Panc1 (cell line): ENCODE measurements at regions of chr16 and their contacts with region 1.

Region 1: GRCh38 chr16:84952335-84953189 is 58.8 kb downstream of the ZDHHC7 start:
- DNase-seq: peak; percentile 61
- ATAC-seq: peak; percentile 97
- H3K4me3 ChIP-seq: no peak overlapping the region
- H3K27ac ChIP-seq: no peak overlapping the region
- H3K4me1 ChIP-seq: no peaks in the 10 kb centered on the region
- H3K27me3 ChIP-seq: no peaks in the 10 kb centered on the region
- CTCF ChIP-seq: peak; percentile 86

Region 2: GRCh38 chr16:84925092-84925772 is 27.3 kb before region 1 on chr16:
- CTCF ChIA-PET with region 1: interaction called, 10 read pairs
- POLR2A ChIA-PET with region 1: no interaction called
- in situ Hi-C with region 1: no loop called
- intact Hi-C with region 1: no loop called
- DNase-seq: peak; percentile 39
- ATAC-seq: peak; percentile 78
- H3K4me3 ChIP-seq: no peak overlapping the region
- H3K27ac ChIP-seq: no peak overlapping the region
- H3K4me1 ChIP-seq: no peaks in the 10 kb centered on the region
- H3K27me3 ChIP-seq: no peaks in the 10 kb centered on the region
- CTCF ChIP-seq: peak; percentile 90

Region 3: DNA sequence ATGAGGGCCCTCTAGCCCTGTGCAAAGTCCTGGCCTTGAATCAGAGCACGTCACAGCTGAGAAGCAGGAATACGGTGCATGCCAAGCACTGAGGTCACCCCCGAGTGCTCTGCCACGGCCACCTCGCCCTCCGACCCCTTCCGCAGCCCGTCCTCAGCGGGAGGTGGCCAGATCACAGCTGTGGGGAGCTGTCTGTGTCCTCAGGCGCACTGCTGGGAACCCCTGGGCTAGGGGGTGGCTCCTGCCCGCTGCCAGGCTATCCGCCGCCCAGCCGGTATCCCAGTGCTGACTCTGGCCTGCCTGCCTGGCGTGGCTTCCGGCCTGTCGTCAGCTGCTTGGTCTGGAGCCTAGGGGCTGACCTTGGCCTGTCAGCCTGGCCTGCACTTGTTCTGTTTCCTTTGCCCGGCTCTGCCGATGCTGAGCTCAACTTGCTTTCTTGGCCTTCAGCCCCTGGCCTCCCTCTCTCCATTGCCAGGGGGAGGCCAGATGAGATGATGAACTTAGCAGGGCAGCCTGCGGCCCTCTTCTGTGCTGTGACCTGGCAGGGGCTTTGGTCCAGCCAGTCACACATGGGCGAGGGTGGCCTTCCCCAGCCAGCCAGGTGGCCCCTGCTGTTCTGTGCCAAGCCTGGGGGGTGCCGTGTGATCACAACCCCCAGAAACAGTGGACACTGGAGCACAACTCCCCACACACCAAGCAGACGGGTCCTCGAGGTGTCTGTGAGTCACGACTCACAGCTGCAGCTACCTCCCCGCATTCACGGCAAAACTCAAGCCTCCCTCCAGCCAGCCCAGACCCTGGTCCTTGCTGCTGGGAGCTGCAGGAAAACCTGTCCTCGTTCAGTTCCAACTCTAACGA is 18.6 kb before region 1 on chr16:
- CTCF ChIA-PET with region 1: interaction called, 3 read pairs
- POLR2A ChIA-PET with region 1: interaction called, 12 read pairs
- in situ Hi-C with region 1: no loop called
- intact Hi-C with region 1: no loop called
- DNase-seq: no peak
- ATAC-seq: no peak
- H3K4me3 ChIP-seq: no peak overlapping the region
- H3K27ac ChIP-seq: no peak overlapping the region
- H3K4me1 ChIP-seq: no peaks in the 10 kb centered on the region
- H3K27me3 ChIP-seq: no peaks in the 10 kb centered on the region
- CTCF ChIP-seq: no peak

Region 4: GRCh38 chr16:84963066-84963465 is 10.5 kb after region 1 on chr16:
- CTCF ChIA-PET with region 1: interaction called, 13 read pairs
- POLR2A ChIA-PET with region 1: no interaction called
- in situ Hi-C with region 1: no loop called
- intact Hi-C with region 1: no loop called
- DNase-seq: no peak
- ATAC-seq: no peak
- H3K4me3 ChIP-seq: no peak overlapping the region
- H3K27ac ChIP-seq: no peak overlapping the region
- H3K4me1 ChIP-seq: no peaks in the 10 kb centered on the region
- H3K27me3 ChIP-seq: no peaks in the 10 kb centered on the region
- CTCF ChIP-seq: no peak